Endothelial cell of umbilical vein (primary cell): ENCODE measurements at regions of chr15 and their contacts with region 1.

Region 1: GRCh38 chr15:40274350-40275274 is 8.3 kb downstream of the ANKRD63 start:
- DNase-seq: peak; percentile 82
- H3K4me3 ChIP-seq: no peak overlapping the region
- H3K27ac ChIP-seq: no peak overlapping the region
- H3K4me1 ChIP-seq: no peaks in the 10 kb centered on the region
- H3K27me3 ChIP-seq: peaks cover 17 to 25% of the 10 kb centered on the region in 2 experiments
- CTCF ChIP-seq: peak; percentile 100
- POLR2A ChIP-seq: no peak

Region 2: GRCh38 chr15:39666677-39667076 is 607.9 kb before region 1 on chr15:
- CTCF ChIA-PET with region 1: no interaction called
- POLR2A ChIA-PET with region 1: no interaction called
- dilution Hi-C with region 1: no loop called
- intact Hi-C with region 1: no loop called
- DNase-seq: peak; percentile 53
- H3K4me3 ChIP-seq: no peak overlapping the region
- H3K27ac ChIP-seq: peak overlapping the region; percentile 2
- H3K4me1 ChIP-seq: peaks cover 17% of the 10 kb centered on the region
- H3K27me3 ChIP-seq: no peaks in the 10 kb centered on the region
- CTCF ChIP-seq: no peak
- POLR2A ChIP-seq: no peak

Region 3: DNA sequence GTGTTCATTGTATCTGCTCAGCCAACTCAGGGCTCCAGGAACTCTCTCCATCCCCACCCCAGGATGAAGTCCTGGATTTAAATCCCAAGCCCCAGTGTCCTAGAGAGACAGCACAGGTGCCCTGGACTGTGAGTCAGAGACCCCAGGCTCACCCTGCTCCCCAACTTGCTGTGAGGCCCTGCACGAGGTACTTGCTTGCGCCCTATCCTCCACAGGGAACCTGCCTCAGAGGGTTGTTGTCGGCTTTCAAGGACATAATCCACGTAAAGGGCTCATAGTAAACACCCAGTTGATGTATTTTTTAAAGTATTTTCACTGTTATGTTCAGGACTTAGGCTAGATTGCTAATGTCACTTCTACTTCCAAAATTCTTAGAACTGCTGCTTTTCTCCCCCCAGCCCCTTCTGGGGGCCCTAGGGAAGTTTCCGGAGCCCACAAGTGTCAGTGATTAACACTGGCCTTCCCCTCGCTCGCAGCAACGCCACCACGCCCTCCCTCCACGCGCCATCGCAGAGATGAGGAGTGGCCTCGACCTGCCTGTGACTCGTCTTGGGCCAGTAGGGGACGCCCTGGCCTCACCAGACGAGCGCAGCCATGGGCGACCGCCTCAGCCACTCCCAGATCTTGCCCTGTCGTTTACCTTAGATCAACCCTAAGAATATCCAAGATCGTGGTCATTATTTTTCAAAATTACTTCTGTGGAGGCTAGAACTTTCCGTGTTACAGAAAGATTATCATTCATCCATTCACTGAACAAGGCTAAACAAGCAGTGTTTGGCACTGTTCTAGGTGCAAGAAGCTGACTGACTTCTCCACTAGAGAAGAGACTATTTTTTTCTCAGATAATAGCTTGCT is 229.7 kb before region 1 on chr15:
- CTCF ChIA-PET with region 1: interaction called, 169 read pairs
- POLR2A ChIA-PET with region 1: no interaction called
- dilution Hi-C with region 1: no loop called
- intact Hi-C with region 1: loop called (anchors 1 kb)
- DNase-seq: peak; percentile 83
- H3K4me3 ChIP-seq: no peak overlapping the region
- H3K27ac ChIP-seq: no peak overlapping the region
- H3K4me1 ChIP-seq: peaks cover 28% of the 10 kb centered on the region
- H3K27me3 ChIP-seq: no peaks in the 10 kb centered on the region
- CTCF ChIP-seq: peak; percentile 97
- POLR2A ChIP-seq: no peak

Region 4: GRCh38 chr15:40183636-40184463 is 90.8 kb before region 1 on chr15:
- CTCF ChIA-PET with region 1: interaction called, 11 read pairs
- POLR2A ChIA-PET with region 1: no interaction called
- dilution Hi-C with region 1: no loop called
- intact Hi-C with region 1: no loop called
- DNase-seq: no peak
- H3K4me3 ChIP-seq: no peak overlapping the region
- H3K27ac ChIP-seq: no peak overlapping the region
- H3K4me1 ChIP-seq: no peaks in the 10 kb centered on the region
- H3K27me3 ChIP-seq: no peaks in the 10 kb centered on the region
- CTCF ChIP-seq: no peak
- POLR2A ChIP-seq: no peak

Region 5: DNA sequence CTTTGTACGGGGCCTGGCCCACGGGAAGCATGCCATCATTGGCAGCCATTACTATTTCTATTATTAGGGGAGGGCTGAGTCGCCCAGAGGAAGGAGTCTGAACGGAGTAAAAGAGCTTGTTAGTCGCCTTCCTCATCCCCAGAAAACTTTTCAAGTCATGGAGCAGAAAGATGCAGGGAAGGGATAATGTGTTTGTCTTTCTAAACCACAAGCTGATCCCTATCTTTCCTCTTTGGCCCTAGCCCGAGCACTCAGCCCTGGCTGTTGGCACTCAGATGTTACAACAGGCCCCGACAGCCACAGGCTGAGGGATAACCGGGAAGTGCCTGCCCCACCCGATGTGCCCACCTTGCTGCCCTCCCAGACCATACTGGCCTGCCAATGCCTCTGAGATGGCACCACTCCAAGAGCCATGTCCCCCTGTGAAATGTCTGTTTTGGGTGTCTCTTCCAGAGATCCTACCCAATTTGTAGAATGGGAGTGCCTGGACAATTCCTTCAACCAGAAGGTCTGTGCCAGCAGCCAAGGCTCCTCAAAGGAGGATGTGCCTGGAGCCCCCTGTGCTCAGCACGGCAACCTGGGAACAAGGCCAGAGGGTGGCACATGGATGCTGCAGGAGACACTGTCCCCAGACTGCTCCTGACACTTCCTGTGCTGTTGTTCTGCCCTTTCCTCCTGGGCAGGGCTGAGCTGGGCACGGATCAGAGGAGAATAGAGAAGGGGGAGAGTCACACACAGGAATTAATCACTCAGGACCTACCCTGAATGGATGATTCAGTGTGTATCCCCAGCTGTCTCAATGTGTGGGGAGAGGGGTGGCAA is 24.9 kb before region 1 on chr15:
- CTCF ChIA-PET with region 1: interaction called, 31 read pairs
- POLR2A ChIA-PET with region 1: no interaction called
- dilution Hi-C with region 1: no loop called
- intact Hi-C with region 1: no loop called
- DNase-seq: no peak
- H3K4me3 ChIP-seq: no peak overlapping the region
- H3K27ac ChIP-seq: no peak overlapping the region
- H3K4me1 ChIP-seq: peaks cover 11% of the 10 kb centered on the region
- H3K27me3 ChIP-seq: peaks cover 32 to 33% of the 10 kb centered on the region in 2 experiments
- CTCF ChIP-seq: no peak
- POLR2A ChIP-seq: no peak

Region 6: DNA sequence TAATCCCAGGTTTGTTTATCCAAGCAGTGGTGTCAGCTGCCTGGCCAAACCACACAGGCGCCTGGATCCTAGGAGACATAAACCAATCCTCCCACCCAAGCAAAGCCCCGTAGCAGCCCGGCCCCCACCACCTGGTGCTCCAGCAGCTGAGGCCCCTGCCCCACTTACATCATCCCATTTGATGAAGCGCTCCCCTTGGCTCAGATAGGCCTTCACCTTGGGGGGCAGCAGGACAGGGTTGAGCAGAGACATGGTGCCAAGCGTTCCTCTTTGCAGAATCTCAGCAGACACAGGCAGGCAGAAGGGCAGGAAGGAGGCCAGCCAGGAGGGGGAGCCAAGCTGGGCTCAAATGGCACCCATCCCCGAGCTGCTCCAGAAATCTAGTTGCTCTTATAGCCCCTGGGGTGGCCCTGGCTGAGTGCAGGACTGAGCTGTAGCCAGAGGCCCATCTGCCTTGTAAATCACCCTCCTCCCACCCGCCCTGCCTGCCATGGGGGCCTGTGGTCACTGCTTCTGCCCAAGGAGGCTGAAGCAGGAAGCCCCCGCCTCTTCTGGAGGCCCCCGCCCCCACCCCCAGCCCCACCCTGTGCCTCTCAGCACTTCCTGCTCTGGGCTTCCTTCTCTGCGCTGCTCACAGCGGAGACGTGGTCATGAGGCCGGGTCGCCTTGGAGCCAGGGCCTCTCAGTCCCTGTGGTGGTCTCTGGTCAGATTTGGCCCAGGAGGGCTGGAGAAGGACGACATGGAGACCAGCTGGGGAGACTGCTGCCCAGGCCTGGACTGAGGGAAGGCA is 33.0 kb after region 1 on chr15 and contains the start of gene PLCB2:
- CTCF ChIA-PET with region 1: interaction called, 403 read pairs
- POLR2A ChIA-PET with region 1: no interaction called
- dilution Hi-C with region 1: no loop called
- intact Hi-C with region 1: loop called (anchors 1 kb)
- DNase-seq: no peak
- H3K4me3 ChIP-seq: no peak within 1 kb of the TSS
- H3K27ac ChIP-seq: no peak within 1 kb of the TSS
- H3K4me1 ChIP-seq: no peaks in the 10 kb centered on the region
- H3K27me3 ChIP-seq: peaks cover 4 to 5% of the 10 kb centered on the region in 2 experiments
- CTCF ChIP-seq: peak in 1 of 2 donors; percentile 42
- POLR2A ChIP-seq: no peak
- total RNA-seq, gene PLCB2: 1.5 and 4.3 TPM in 2 replicates

Region 7: GRCh38 chr15:40357723-40358470 is 83.3 kb after region 1 on chr15 and contains the start of gene DISP2:
- CTCF ChIA-PET with region 1: interaction called, 24 read pairs
- POLR2A ChIA-PET with region 1: no interaction called
- dilution Hi-C with region 1: no loop called
- intact Hi-C with region 1: no loop called
- DNase-seq: peak; percentile 84
- H3K4me3 ChIP-seq: peak within 1 kb of the TSS; percentile 35 to 54 (median 41)
- H3K27ac ChIP-seq: no peak within 1 kb of the TSS
- H3K4me1 ChIP-seq: peaks cover 8% of the 10 kb centered on the region
- H3K27me3 ChIP-seq: peaks cover 9 to 13% of the 10 kb centered on the region in 2 experiments
- CTCF ChIP-seq: no peak
- POLR2A ChIP-seq: no peak
- total RNA-seq, gene DISP2: 0.65 and 1.2 TPM in 2 replicates